Natural killer cell (primary cell): ENCODE measurements at regions of chr16 and their contacts with region 1.

Region 1: DNA sequence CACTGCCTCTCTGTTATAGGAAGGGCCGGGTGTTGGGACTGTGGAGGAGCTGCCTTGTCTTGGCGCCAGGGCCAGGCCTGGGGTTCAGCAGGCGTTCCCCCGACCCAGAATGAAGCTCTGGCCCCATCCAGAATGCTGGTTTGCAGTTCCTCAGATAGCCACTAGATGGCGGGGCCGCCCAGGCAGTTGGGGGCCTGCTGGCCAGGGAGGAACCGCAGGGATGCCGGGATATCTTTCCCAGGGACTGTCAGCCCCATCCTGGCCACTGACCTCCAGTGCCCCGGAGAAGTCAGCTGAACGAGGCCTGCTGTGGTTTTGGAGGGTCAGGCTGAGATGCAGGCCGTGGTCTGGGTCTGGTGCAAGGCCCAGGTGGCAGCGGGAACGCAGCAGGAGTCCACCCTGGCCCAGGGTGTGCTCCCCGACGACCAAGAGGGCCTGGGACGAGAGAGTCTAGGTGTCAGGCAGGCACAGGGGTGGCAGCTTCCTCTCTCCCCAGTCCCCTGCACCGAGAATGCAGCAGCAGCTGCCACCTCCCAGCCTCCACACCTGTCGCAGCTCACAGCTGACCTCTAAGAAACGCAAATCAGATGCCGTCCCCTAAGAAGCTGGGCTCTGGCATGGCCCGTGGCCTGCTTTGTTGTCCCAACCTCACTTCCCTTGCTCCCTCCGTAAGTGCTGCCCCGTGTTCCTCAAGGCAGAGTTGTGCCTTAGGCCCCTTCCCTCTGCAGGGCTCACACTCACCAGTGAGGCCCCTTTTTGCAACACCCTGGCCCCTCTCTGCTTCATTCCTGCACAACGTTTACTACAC is 51.2 kb downstream of the RMI2 start:
- DNase-seq: peak; percentile 63 to 77
- ATAC-seq: peak; percentile 68 to 83 (median 80)
- H3K4me3 ChIP-seq: no peak overlapping the region
- H3K4me3 Mint-ChIP-seq: no peak overlapping the region
- H3K27ac ChIP-seq: no peak overlapping the region
- H3K27ac Mint-ChIP-seq: no peak overlapping the region
- H3K4me1 ChIP-seq: no peaks in the 10 kb centered on the region
- H3K4me1 Mint-ChIP-seq: no peaks in the 10 kb centered on the region
- H3K27me3 ChIP-seq: no peaks in the 10 kb centered on the region
- H3K27me3 Mint-ChIP-seq: no peaks in the 10 kb centered on the region
- CTCF ChIP-seq: peak; percentile 99

Region 2: DNA sequence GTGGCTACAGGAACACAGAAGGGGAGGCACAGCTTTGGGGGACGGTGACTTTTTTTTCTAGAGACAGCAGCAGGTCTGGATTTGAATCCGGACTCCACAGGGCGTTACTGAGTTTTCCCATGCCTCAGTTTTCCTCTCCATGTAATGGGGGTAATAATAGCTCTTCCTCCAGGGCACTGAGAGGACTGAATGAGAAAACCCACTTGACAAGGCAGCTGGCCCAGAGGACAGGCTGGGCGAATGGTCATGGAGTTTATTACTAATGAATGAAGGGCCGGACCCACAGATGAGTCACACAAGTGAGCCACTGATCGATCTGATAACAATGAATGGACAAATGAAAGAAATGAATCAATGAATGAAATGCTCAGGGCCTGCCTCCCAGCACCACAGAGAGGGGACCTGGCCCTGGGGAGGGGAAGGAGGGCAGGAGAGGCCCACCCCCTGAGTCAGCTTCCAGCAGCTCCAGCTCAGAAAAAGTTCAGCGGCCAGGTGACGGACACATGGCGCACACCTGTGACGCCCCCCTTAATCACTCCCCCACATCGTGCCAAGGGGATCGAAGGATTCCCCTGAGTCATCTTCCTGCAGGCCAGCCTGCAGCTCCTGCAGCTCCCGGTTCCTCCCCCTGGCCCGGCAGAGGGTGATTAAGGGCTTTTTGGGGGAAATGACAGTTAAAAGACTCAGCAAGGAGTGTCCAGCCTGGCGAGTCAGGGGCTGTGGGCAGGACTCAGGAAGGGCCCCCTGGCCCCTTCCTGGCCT is 194.8 kb before region 1 on chr16:
- intact Hi-C with region 1: no loop called
- DNase-seq: no peak
- ATAC-seq: no peak
- H3K4me3 ChIP-seq: no peak overlapping the region
- H3K4me3 Mint-ChIP-seq: no peak overlapping the region
- H3K27ac ChIP-seq: no peak overlapping the region
- H3K27ac Mint-ChIP-seq: no peak overlapping the region
- H3K4me1 ChIP-seq: peaks cover 29% of the 10 kb centered on the region
- H3K4me1 Mint-ChIP-seq: peaks cover 4 to 14% of the 10 kb centered on the region in 2 donors
- H3K27me3 ChIP-seq: no peaks in the 10 kb centered on the region
- H3K27me3 Mint-ChIP-seq: peaks cover 0 to 8% of the 10 kb centered on the region in 2 donors
- CTCF ChIP-seq: no peak

Region 3: GRCh38 chr16:11621920-11622651 is 225.6 kb after region 1 on chr16:
- intact Hi-C with region 1: no loop called
- DNase-seq: peak; percentile 61 to 79
- ATAC-seq: peak; percentile 65 to 82 (median 80)
- H3K4me3 ChIP-seq: no peak overlapping the region
- H3K4me3 Mint-ChIP-seq: peak overlapping the region; percentile 93
- H3K27ac ChIP-seq: peak overlapping the region; percentile 70
- H3K27ac Mint-ChIP-seq: peak overlapping the region; percentile 93 to 97
- H3K4me1 ChIP-seq: peaks cover 78% of the 10 kb centered on the region
- H3K4me1 Mint-ChIP-seq: peaks cover 48 to 58% of the 10 kb centered on the region in 2 donors
- H3K27me3 ChIP-seq: no peaks in the 10 kb centered on the region
- H3K27me3 Mint-ChIP-seq: no peaks in the 10 kb centered on the region
- CTCF ChIP-seq: no peak

Region 4: DNA sequence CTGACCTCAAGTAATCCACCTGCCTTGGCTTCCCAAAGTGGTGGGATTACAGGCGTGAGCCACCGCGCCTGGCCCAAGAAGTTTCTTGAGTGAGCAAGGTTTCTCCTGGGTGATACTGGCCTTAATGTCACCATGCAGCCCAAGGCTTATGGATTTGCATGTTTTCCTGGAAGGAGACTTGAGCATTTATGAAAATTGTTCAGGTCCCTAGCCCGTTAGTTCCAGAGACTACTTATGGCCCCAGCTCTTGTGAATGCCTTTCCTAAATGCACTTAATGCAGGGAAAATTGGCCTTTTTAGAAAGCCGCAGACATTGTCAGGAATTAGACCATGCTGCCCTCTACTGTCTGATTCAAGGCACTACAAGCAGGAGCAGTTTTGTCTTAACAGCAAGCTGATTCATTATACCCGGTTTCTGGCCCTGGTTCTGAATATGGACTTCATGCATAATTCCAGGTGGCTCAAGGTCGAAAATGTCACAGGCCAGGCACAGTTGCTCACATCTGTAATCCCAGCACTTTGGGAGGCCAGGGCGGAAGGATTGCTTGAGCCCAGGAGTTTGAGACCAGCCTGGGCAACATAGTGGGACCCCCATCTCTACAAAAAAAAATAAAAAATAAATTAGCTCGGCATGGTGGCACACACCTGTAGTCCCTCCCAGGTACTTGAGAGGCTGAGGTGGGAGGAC is 671.4 kb after region 1 on chr16:
- intact Hi-C with region 1: loop called (anchors 2 kb)
- DNase-seq: peak in 1 of 2 donors; percentile 85
- ATAC-seq: peak; percentile 82 to 87 (median 85)
- H3K4me3 ChIP-seq: no peak overlapping the region
- H3K4me3 Mint-ChIP-seq: no peak overlapping the region
- H3K27ac ChIP-seq: no peak overlapping the region
- H3K27ac Mint-ChIP-seq: no peak overlapping the region
- H3K4me1 ChIP-seq: no peaks in the 10 kb centered on the region
- H3K4me1 Mint-ChIP-seq: no peaks in the 10 kb centered on the region
- H3K27me3 ChIP-seq: no peaks in the 10 kb centered on the region
- H3K27me3 Mint-ChIP-seq: no peaks in the 10 kb centered on the region
- CTCF ChIP-seq: peak; percentile 87